ENCODE measurements at regions of chr5 and their contacts with region 1.

Region 1: DNA sequence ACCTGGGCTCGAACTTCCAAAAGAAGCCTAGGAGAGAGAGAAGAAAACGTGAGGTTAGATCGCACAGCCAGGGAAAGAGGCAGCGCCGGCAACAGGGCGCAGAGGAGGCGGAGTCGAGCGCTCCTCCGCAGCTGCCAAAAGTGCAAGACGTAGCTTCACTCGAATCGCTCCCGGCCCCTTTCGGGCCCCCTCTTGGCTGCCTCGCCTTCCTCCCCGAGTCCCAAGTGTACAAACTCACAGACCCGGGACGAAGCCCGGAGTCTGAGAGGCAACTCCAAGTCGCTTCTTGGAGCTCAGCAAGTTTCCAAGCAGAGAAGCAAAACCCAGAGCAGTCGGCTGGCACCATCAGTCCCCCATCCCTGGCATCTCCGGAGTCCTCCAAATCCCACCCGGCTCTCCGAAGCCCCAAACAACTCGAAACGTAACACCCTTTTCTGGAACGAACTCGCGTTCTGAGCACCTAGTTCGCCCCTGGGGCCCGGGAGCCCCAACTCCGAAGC is 1.2 kb downstream of the MIER3 start:
- DNase-seq: peak; percentile 76

Region 2: GRCh38 chr5:56909294-56910209 is 41.1 kb before region 1 on chr5 and contains the start of gene SETD9:
- CTCF ChIA-PET with region 1: interaction called, 3 read pairs
- POLR2A ChIA-PET with region 1: interaction called, 32 read pairs
- DNase-seq: peak; percentile 96

Measured in HEK293T (cell line).